T-cell (primary cell): ENCODE measurements at regions of chr5 and their contacts with region 1.

Region 1: GRCh38 chr5:96344678-96345577 is 88.1 kb downstream of the PCSK1 start:
- DNase-seq: peak in 16 of 35 experiments; percentile 2 to 76 (median 8)
- ATAC-seq: peak; percentile 87 to 93 (median 90)
- H3K4me3 ChIP-seq: no peak overlapping the region
- H3K4me3 Mint-ChIP-seq: peak overlapping the region; percentile 4 to 48 (median 21)
- H3K27ac ChIP-seq: no peak overlapping the region
- H3K27ac Mint-ChIP-seq: peak overlapping the region; percentile 0 to 1
- H3K4me1 ChIP-seq: peaks cover 4 to 13% of the 10 kb centered on the region in 2 experiments
- H3K4me1 Mint-ChIP-seq: peaks cover 16 to 17% (median 17%) of the 10 kb centered on the region in 3 donors
- H3K27me3 ChIP-seq: peaks cover 0 to 3% of the 10 kb centered on the region in 2 experiments
- H3K27me3 Mint-ChIP-seq: peaks cover 8 to 13% of the 10 kb centered on the region in 2 donors

Region 2: GRCh38 chr5:95870105-95870672 is 474.7 kb before region 1 on chr5:
- CTCF ChIA-PET with region 1: interaction called in 1 of 2 experiments, 10 read pairs
- POLR2A ChIA-PET with region 1: no interaction called
- DNase-seq: no peak
- ATAC-seq: no peak
- H3K4me3 ChIP-seq: no peak overlapping the region
- H3K4me3 Mint-ChIP-seq: peak overlapping the region in 1 of 3 donors; percentile 62
- H3K27ac ChIP-seq: no peak overlapping the region
- H3K27ac Mint-ChIP-seq: peak overlapping the region in 1 of 2 donors; percentile 72
- H3K4me1 ChIP-seq: peaks cover 21 to 22% of the 10 kb centered on the region in 2 experiments
- H3K4me1 Mint-ChIP-seq: peaks cover 32 to 37% (median 32%) of the 10 kb centered on the region in 3 donors
- H3K27me3 ChIP-seq: no peaks in the 10 kb centered on the region
- H3K27me3 Mint-ChIP-seq: no peaks in the 10 kb centered on the region

Region 3: DNA sequence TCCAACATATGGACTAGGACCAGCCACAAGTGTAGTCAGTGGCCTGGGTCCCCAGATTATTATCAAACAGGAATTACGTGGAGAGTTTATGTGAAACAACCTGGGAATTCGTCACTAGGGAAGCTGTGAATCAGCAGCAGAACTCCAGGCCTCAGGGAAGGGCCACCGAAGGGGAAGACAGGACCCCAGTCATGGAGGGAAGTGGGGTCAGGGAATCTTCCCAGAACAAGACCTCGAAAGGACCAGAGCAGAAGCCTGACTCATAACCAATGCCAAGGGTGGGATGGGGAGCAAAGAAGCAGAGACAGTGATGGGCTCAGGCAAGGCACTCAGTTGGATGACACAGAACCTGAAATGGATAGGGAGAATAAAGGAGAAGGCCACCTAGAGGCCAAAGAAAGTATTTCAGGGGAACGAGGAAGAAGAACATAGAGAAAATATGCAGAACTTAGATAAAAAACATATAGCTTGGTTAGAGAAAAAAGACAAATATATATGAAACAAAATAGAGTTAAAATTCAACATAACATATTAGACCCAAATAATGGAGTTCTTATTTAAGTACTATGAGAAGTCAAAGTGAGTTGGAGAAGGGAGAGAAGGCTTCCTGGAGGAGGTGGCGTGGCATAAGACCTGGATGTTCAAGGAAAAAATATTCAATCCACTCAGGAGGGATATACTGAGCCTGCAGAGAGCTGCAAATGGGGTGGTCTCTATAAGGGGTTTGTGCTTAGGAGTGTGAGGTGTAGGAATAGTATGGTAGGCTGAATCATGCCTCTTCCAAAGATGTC is 250.6 kb after region 1 on chr5:
- CTCF ChIA-PET with region 1: interaction called, 73 to 162 read pairs
- POLR2A ChIA-PET with region 1: no interaction called
- DNase-seq: peak in 4 of 35 experiments; percentile 2 to 46 (median 5)
- ATAC-seq: no peak
- H3K4me3 ChIP-seq: no peak overlapping the region
- H3K4me3 Mint-ChIP-seq: no peak overlapping the region
- H3K27ac ChIP-seq: no peak overlapping the region
- H3K27ac Mint-ChIP-seq: no peak overlapping the region
- H3K4me1 ChIP-seq: no peaks in the 10 kb centered on the region
- H3K4me1 Mint-ChIP-seq: no peaks in the 10 kb centered on the region
- H3K27me3 ChIP-seq: peaks cover 0 to 2% of the 10 kb centered on the region in 2 experiments
- H3K27me3 Mint-ChIP-seq: peaks cover 3 to 14% of the 10 kb centered on the region in 2 donors

Region 4: DNA sequence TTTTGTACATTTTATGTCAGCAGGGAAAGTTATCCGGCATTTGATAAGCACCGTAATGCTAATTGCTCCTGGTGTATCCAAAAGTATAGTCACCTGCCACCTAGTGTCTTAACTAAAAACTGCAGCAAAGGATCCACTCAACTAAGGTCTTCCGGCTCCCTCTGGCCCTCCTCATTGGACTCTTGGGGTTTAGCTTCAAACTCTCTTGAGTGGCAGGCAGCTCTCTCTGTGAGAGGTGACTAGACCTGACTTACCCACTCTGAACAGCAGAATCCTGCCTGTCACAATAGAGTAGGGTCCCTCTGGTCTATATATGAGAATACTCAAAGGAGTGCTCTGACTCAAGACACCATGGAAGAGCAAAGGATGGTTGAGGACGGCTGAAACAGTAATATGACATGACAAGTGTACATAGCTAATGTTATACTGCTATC is 256.9 kb after region 1 on chr5:
- CTCF ChIA-PET with region 1: interaction called, 73 to 162 read pairs
- POLR2A ChIA-PET with region 1: no interaction called
- DNase-seq: peak in 27 of 35 experiments; percentile 8 to 81 (median 31)
- ATAC-seq: peak; percentile 66 to 80 (median 76)
- H3K4me3 ChIP-seq: no peak overlapping the region
- H3K4me3 Mint-ChIP-seq: no peak overlapping the region
- H3K27ac ChIP-seq: no peak overlapping the region
- H3K27ac Mint-ChIP-seq: no peak overlapping the region
- H3K4me1 ChIP-seq: no peaks in the 10 kb centered on the region
- H3K4me1 Mint-ChIP-seq: peaks cover 0 to 3% (median 2%) of the 10 kb centered on the region in 3 donors
- H3K27me3 ChIP-seq: no peaks in the 10 kb centered on the region
- H3K27me3 Mint-ChIP-seq: peaks cover 8 to 12% of the 10 kb centered on the region in 2 donors

Region 5: DNA sequence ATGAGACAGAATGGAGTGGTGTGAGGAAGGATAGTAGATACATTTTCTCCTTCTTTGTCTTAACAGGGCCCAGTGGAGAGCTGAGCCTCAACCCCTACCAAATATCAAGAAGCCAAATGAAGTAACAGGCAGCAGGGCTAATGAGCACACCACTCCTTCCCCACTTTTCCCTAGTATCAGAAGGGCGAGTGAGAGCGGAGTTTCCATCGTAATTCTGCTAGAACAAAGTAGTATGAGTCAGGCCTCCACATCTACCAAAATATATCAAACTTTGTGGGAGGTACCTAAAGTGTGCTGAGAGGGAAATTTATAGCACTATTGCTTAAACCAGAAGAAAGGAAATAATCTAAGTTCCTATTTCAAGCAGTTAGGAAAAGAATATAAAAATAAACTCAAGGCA is 1659.5 kb after region 1 on chr5:
- CTCF ChIA-PET with region 1: no interaction called
- POLR2A ChIA-PET with region 1: no interaction called
- DNase-seq: no peak
- ATAC-seq: no peak
- H3K4me3 ChIP-seq: no peak overlapping the region
- H3K4me3 Mint-ChIP-seq: no peak overlapping the region
- H3K27ac ChIP-seq: no peak overlapping the region
- H3K27ac Mint-ChIP-seq: no peak overlapping the region
- H3K4me1 ChIP-seq: no peaks in the 10 kb centered on the region
- H3K4me1 Mint-ChIP-seq: no peaks in the 10 kb centered on the region
- H3K27me3 ChIP-seq: no peaks in the 10 kb centered on the region
- H3K27me3 Mint-ChIP-seq: peaks cover 0 to 3% of the 10 kb centered on the region in 2 donors